Naive thymus-derived CD4-positive, alpha-beta T cell (primary cell): ENCODE measurements at regions of chr4 and their contacts with region 1.

Region 1: GRCh38 chr4:121950212-121950679 is 1.6 kb downstream of the TRPC3 start:
- DNase-seq: peak; percentile 53 to 88 (median 68)
- ATAC-seq: peak; percentile 87
- H3K4me3 ChIP-seq: peak overlapping the region; percentile 50
- H3K4me3 Mint-ChIP-seq: peak overlapping the region; percentile 84 to 95 (median 88)
- H3K27ac ChIP-seq: no peak overlapping the region
- H3K27ac Mint-ChIP-seq: peak overlapping the region in 4 of 9 donors; percentile 10 to 45 (median 20)
- H3K4me1 ChIP-seq: no peaks in the 10 kb centered on the region
- H3K4me1 Mint-ChIP-seq: peaks cover 0 to 26% (median 17%) of the 10 kb centered on the region in 7 donors
- H3K27me3 ChIP-seq: peaks cover 0 to 11% of the 10 kb centered on the region in 2 donors
- H3K27me3 Mint-ChIP-seq: peaks cover 32 to 65% (median 47%) of the 10 kb centered on the region in 5 donors

Region 2: DNA sequence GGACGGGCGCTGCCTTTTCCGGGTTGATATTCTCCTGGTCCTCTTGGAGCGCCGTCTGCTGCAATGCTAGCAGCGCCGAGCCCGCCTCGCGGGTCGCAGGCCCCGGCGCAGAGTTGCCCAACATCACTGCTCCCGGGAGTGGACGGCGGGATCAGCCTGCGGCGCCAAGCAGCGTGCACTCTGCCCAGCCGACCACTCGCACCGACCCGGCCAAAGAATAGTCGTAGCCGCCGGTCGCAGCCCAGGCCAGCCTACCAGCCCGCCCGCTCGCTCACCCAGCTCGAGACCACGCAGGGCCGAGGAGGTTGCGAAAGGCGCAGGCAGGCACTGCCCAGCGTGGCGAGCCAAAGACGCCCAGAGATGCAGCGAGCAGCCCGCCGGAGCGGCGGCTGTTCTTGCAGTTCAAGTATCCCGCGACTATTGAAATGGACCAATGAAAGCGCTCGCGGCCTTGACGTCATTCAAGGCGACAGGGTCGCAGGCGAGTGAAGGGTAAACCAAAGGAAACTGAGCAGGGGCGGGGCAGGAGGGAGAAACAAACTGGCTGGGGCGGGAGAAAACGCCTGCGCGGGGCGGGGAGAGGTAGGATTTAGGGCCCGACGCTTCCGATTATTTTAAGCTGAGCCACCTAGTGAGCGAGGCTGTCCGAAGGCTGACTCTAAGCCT is 126.6 kb before region 1 on chr4 and contains the start of gene CCNA2:
- CTCF ChIA-PET with region 1: no interaction called
- POLR2A ChIA-PET with region 1: no interaction called
- intact Hi-C with region 1: loop called in 1 of 2 experiments (anchors 2 kb)
- DNase-seq: peak; percentile 86 to 95 (median 93)
- ATAC-seq: peak; percentile 99
- H3K4me3 ChIP-seq: peak within 1 kb of the TSS; percentile 85
- H3K4me3 Mint-ChIP-seq: peak within 1 kb of the TSS; percentile 85 to 100 (median 92)
- H3K27ac ChIP-seq: peak within 1 kb of the TSS; percentile 60
- H3K27ac Mint-ChIP-seq: peak within 1 kb of the TSS; percentile 72 to 97 (median 93)
- H3K4me1 ChIP-seq: peaks cover 0 to 9% of the 10 kb centered on the region in 2 donors
- H3K4me1 Mint-ChIP-seq: peaks cover 4 to 44% (median 12%) of the 10 kb centered on the region in 7 donors
- H3K27me3 ChIP-seq: no peaks in the 10 kb centered on the region
- H3K27me3 Mint-ChIP-seq: peaks cover 0 to 3% (median 0%) of the 10 kb centered on the region in 5 donors
- total RNA-seq, gene CCNA2: 0.24 to 63.7 (median 1.2) TPM

Region 3: DNA sequence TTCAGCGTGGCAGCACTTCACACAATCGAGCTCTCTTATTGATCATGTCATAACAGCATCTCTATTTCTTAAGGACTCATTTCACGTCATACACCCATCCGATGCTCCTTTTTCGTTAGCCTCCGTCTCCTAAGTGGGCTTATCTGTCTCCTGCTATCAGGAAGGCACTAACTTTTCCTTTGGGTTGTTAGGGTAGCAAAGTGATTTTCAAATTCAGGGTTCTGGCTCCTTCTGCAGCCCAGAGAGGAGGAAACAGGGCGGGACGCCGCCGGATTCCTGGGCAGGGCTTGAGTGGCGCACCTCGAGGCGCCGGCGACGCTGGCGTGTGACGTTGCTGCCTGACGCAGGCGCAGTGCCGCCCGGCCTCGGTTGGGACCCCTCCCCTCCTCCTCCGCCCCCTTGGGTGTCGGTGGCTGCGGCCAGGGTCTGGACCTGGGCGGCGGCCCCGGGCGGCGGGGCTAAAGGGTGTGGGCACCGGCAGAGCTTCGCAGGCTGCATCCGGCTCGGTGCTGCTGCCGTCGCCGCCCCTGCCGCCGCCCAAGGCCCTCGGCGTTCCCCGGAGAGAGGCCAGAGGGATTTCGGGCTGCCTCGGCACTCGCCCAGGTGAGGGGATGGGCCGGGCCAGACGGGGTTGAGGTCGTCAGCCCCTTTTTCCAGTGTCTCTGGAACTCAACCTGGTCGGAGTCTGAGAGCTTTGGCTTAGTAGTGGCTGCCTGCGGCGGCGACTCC is 201.9 kb after region 1 on chr4 and contains the start of gene BLTP1:
- CTCF ChIA-PET with region 1: interaction called, 3 read pairs
- POLR2A ChIA-PET with region 1: no interaction called
- intact Hi-C with region 1: loop called (anchors 1 kb)
- DNase-seq: peak; percentile 81 to 92 (median 87)
- ATAC-seq: peak; percentile 95
- H3K4me3 ChIP-seq: peak within 1 kb of the TSS; percentile 96
- H3K4me3 Mint-ChIP-seq: peak within 1 kb of the TSS; percentile 79 to 98 (median 98)
- H3K27ac ChIP-seq: peak within 1 kb of the TSS; percentile 85
- H3K27ac Mint-ChIP-seq: peak within 1 kb of the TSS; percentile 90 to 100 (median 97)
- H3K4me1 ChIP-seq: peaks cover 22 to 28% of the 10 kb centered on the region in 2 donors
- H3K4me1 Mint-ChIP-seq: peaks cover 41 to 84% (median 72%) of the 10 kb centered on the region in 7 donors
- H3K27me3 ChIP-seq: no peaks in the 10 kb centered on the region
- H3K27me3 Mint-ChIP-seq: no peaks in the 10 kb centered on the region
- total RNA-seq, gene BLTP1: 45.9 to 86.6 (median 72.8) TPM

Region 4: DNA sequence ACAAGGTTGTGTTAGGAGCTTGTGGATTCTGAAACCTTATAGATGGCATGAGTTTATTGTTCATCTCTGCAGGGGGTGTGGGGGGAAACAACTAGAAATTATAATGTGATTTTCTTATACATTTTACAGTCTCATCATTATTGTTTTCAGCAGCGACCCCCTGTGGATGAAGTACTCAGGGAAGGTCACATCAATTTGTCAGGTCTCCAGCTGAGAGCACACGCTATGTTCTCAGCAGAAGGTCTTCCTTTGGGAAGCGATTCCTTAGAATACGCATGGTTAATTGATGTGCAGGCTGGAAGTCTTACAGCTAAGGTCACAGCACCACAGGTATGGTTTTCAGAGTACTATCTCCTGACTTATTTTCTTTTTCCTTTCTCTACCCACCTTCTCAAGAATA is 274.1 kb after region 1 on chr4:
- CTCF ChIA-PET with region 1: no interaction called
- POLR2A ChIA-PET with region 1: no interaction called
- intact Hi-C with region 1: loop called (anchors 1 to 2 kb)
- DNase-seq: peak in 2 of 9 donors; percentile 10 to 21
- ATAC-seq: no peak
- H3K4me3 ChIP-seq: no peak overlapping the region
- H3K4me3 Mint-ChIP-seq: no peak overlapping the region
- H3K27ac ChIP-seq: no peak overlapping the region
- H3K27ac Mint-ChIP-seq: peak overlapping the region in 1 of 9 donors; percentile 55
- H3K4me1 ChIP-seq: no peaks in the 10 kb centered on the region
- H3K4me1 Mint-ChIP-seq: peaks cover 0 to 23% (median 8%) of the 10 kb centered on the region in 7 donors
- H3K27me3 ChIP-seq: no peaks in the 10 kb centered on the region
- H3K27me3 Mint-ChIP-seq: no peaks in the 10 kb centered on the region

Region 5: DNA sequence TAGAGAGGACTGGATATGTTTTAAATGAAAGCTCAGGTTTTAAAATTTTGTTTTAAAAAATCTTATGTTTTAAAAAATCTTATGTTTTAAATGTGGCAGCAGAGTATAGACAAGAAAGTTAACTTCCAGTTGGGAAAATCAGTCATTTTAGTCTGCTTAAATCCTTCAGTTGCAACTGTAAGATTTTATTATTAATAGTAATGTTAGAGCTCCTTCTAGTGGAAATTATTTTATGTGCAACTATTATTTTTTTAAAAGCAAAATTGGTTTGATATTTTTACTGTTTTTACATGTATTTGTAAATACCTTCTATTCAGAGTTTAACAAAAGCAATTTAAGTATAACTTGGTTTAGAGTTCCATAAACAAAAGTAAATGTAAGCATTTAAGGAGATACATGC is 980.6 kb after region 1 on chr4:
- CTCF ChIA-PET with region 1: no interaction called
- POLR2A ChIA-PET with region 1: no interaction called
- intact Hi-C with region 1: loop called (anchors 2 kb)
- DNase-seq: peak in 3 of 9 donors; percentile 6 to 17 (median 14)
- ATAC-seq: no peak
- H3K4me3 ChIP-seq: no peak overlapping the region
- H3K4me3 Mint-ChIP-seq: no peak overlapping the region
- H3K27ac ChIP-seq: no peak overlapping the region
- H3K27ac Mint-ChIP-seq: no peak overlapping the region
- H3K4me1 ChIP-seq: no peaks in the 10 kb centered on the region
- H3K4me1 Mint-ChIP-seq: peaks cover 0 to 36% (median 7%) of the 10 kb centered on the region in 7 donors
- H3K27me3 ChIP-seq: no peaks in the 10 kb centered on the region
- H3K27me3 Mint-ChIP-seq: no peaks in the 10 kb centered on the region